SK-N-SH (cell line): ENCODE measurements at regions of chr15 and their contacts with region 1.

Region 1: GRCh38 chr15:65304389-65305144 is at the start of gene RNU5B-1:
- DNase-seq: peak; percentile 81
- H3K4me3 ChIP-seq: peak within 1 kb of the TSS; percentile 44 to 56
- H3K27ac ChIP-seq: peak within 1 kb of the TSS; percentile 89 to 95
- H3K4me1 ChIP-seq: peaks cover 8 to 10% of the 10 kb centered on the region in 2 experiments; a peak in 2 of 4 replicates
- H3K27me3 ChIP-seq: no peaks in the 10 kb centered on the region
- CTCF ChIP-seq: peak; percentile 87
- EP300 ChIP-seq: peak; percentile 27 to 81; a peak in 3 of 4 replicates
- RAD21 ChIP-seq: no peak; the same call in 1 of the 2 replicates
- polyA plus RNA-seq, gene RNU5B-1: not detected in 2 replicates

Region 2: DNA sequence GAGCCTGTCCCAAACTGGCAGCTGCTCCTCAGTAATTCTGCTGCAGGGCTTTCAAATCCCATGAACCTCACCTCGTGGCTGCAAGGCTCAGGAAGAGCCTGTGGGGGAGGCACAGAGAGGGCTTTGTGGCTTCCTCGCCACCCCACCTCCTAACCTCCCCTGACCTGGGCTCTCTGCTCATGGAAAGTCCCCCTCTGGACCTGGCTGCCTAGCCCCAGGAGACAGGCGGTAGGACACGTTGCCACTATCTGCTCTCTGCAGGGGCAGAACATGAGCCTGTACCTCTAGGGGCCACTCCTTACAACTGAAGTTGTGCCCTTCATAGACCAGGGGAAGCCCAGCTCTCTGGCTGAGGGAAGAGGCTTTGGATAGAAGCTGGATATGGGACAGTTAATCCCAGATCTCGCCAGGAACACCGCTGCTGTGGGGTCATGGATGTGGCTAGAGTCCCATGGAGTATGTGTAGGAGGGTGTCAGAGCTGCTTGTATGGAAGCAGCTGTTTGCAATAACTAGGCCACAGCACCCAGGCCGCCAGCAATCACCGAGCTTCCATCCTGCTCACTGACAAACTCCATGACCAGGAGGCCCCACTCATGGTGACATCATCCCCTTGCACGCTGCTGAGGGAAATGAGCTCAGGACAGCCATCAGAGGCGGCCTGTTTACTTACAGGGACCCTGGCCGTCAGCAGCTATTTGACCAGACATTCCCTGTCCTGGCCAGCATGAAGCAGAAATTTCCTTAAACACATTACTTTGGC is 59.3 kb before region 1 on chr15:
- CTCF ChIA-PET with region 1: no interaction called
- POLR2A ChIA-PET with region 1: no interaction called
- DNase-seq: no peak
- H3K4me3 ChIP-seq: no peak overlapping the region
- H3K27ac ChIP-seq: no peak overlapping the region
- H3K4me1 ChIP-seq: no peaks in the 10 kb centered on the region; a peak in 1 of 4 replicates
- H3K27me3 ChIP-seq: no peaks in the 10 kb centered on the region
- CTCF ChIP-seq: no peak
- EP300 ChIP-seq: no peak
- RAD21 ChIP-seq: no peak

Region 3: GRCh38 chr15:65286704-65287519 is 17.7 kb before region 1 on chr15 and contains the start of gene PARP16:
- CTCF ChIA-PET with region 1: interaction called, 8 read pairs
- POLR2A ChIA-PET with region 1: interaction called, 12 read pairs
- DNase-seq: peak; percentile 95
- H3K4me3 ChIP-seq: peak within 1 kb of the TSS; percentile 61 to 71
- H3K27ac ChIP-seq: peak within 1 kb of the TSS; percentile 37 to 81; a peak in 3 of 4 replicates
- H3K4me1 ChIP-seq: peaks cover 9 to 13% of the 10 kb centered on the region in 2 experiments; a peak in 3 of 4 replicates
- H3K27me3 ChIP-seq: no peaks in the 10 kb centered on the region
- CTCF ChIP-seq: peak; percentile 24
- EP300 ChIP-seq: no peak; a peak in 1 of 4 replicates
- RAD21 ChIP-seq: no peak
- polyA plus RNA-seq, gene PARP16: 6.3 and 6.5 TPM in 2 replicates

Region 4: GRCh38 chr15:65318870-65319356 is 14.3 kb after region 1 on chr15:
- CTCF ChIA-PET with region 1: interaction called, 9 read pairs
- POLR2A ChIA-PET with region 1: interaction called, 11 read pairs
- DNase-seq: peak; percentile 86
- H3K4me3 ChIP-seq: no peak overlapping the region; a peak in 1 of 4 replicates
- H3K27ac ChIP-seq: no peak overlapping the region
- H3K4me1 ChIP-seq: peaks cover 0 to 7% of the 10 kb centered on the region in 2 experiments; a peak in 1 of 4 replicates
- H3K27me3 ChIP-seq: peaks cover 12% of the 10 kb centered on the region; the same call in 1 of the 2 replicates
- CTCF ChIP-seq: peak; percentile 86
- EP300 ChIP-seq: no peak
- RAD21 ChIP-seq: peak; percentile 99